Psoas muscle (tissue), 8 donors: ENCODE measurements at regions of chr6 and their contacts with region 1.

Region 1: DNA sequence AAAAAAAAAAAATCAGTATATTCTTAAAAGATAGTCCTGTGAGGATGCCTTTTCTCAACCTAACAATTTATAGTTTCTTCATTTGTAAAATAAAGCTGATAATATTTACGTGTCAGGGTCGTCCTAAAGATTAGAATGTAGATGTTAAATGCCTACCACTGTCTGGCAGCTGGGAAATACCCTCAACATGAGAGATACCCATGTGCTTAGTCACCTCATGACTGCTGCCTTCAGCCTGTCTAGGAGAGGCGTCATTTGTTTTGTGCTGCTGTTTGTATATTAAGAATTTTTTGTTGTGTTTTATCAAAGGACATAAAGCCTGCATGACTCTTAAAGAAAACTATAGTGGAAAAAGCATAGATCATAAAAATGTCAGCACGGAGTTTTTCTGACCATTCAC is 9.5 kb downstream of the FAM120B start:
- DNase-seq: no peak
- ATAC-seq: no peak
- H3K4me3 ChIP-seq: no peak overlapping the region
- H3K27ac ChIP-seq: no peak overlapping the region
- H3K4me1 ChIP-seq: peaks cover 45% of the 10 kb centered on the region
- H3K27me3 ChIP-seq: no peaks in the 10 kb centered on the region
- CTCF ChIP-seq: no peak

Region 2: DNA sequence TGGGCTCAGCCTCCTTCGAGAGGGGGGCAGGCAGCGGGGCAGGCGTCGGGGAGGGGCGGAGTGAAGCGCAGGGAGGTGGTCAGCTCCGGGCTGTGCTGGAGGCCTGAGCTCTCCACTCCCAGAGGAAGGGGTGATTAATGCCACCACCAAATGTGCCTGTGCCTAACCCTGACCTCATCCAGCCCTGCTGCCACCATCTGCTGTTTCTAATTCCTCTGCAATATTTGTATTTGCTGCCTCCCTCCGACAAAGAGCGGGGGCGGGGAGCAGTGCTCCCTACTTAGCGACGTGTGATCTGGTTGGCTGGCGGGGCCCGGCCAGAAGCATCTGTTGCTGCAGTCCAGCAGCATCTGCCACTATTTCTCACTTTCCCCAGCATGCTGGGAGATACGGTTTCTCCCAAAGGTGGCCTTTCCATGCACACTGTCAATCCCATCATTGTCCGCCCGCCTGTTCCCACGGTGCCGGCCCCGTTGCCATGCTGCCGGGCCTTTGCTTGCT is 72.2 kb before region 1 on chr6:
- intact Hi-C with region 1: no loop called
- DNase-seq: no peak
- ATAC-seq: peak; percentile 28 to 58 (median 40)
- H3K4me3 ChIP-seq: no peak overlapping the region
- H3K27ac ChIP-seq: no peak overlapping the region
- H3K4me1 ChIP-seq: peaks cover 9% of the 10 kb centered on the region
- H3K27me3 ChIP-seq: peaks cover 0 to 19% (median 0%) of the 10 kb centered on the region in 3 donors
- CTCF ChIP-seq: no peak

Region 3: GRCh38 chr6:170371588-170371987 is 55.5 kb after region 1 on chr6:
- intact Hi-C with region 1: loop called in 1 of 2 experiments (anchors 5 kb)
- DNase-seq: no peak
- ATAC-seq: peak; percentile 28 to 70 (median 53)
- H3K4me3 ChIP-seq: no peak overlapping the region
- H3K27ac ChIP-seq: peak overlapping the region; percentile 74
- H3K4me1 ChIP-seq: peaks cover 27% of the 10 kb centered on the region
- H3K27me3 ChIP-seq: no peaks in the 10 kb centered on the region
- CTCF ChIP-seq: no peak

Region 4: DNA sequence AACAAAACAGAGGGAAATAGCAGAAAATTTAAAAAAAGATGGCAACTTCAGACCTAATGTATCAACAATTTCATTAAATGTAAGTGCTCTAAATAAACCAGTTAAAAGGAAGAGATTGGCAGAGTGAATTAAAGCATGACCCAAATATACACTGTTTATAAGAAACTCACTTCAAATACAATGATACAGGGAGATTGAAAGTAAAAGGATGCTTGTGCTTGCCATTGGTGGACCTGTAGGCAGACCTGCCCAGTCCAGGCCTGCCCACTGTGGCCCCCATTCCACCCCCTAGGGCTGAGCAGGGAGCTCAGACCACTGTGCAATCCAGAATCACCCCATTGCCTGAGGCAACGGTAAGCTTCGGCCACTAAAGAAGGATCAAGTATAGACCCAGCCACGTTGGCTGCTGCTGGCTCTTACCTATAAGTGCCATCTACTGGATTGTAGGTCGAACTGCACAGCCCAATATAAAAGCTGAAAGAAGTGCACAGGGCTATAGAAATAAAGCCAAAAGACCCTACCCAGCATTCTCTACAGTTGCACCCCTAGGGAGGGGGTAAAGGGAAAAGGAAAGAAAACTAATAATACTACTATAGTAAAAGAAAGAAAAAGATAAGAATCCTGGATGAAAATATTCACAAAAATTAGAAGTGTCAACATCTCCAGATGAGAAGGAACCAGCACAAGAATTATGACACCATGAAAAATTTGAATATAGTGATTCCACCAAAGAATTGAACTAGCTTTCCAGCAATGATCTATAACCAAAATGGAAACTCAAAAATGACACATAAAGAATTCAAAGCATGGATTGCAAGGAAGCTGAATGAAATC is 200.9 kb after region 1 on chr6:
- intact Hi-C with region 1: loop called in 1 of 2 experiments (anchors 5 kb)
- DNase-seq: peak in 1 of 2 donors; percentile 23
- ATAC-seq: peak; percentile 72 to 92 (median 88)
- H3K4me3 ChIP-seq: no peak overlapping the region
- H3K27ac ChIP-seq: no peak overlapping the region
- H3K4me1 ChIP-seq: peaks cover 13% of the 10 kb centered on the region
- H3K27me3 ChIP-seq: no peaks in the 10 kb centered on the region
- CTCF ChIP-seq: peak; percentile 63